ENCODE measurements at regions of chr18 and their contacts with region 1.

Region 1: GRCh38 chr18:74342416-74343043 is 26.9 kb downstream of the C18orf63 start:
- DNase-seq: peak; percentile 47
- H3K4me3 ChIP-seq: no peak overlapping the region
- H3K27ac ChIP-seq: no peak overlapping the region
- H3K4me1 ChIP-seq: peaks cover 5% of the 10 kb centered on the region
- H3K27me3 ChIP-seq: no peaks in the 10 kb centered on the region
- CTCF ChIP-seq: peak; percentile 44 to 56 (median 47)
- POLR2A ChIP-seq: no peak

Region 2: GRCh38 chr18:74196220-74197119 is 146.1 kb before region 1 on chr18:
- intact Hi-C with region 1: loop called (anchors 5 kb)
- DNase-seq: peak; percentile 63
- H3K4me3 ChIP-seq: no peak overlapping the region
- H3K27ac ChIP-seq: no peak overlapping the region
- H3K4me1 ChIP-seq: no peaks in the 10 kb centered on the region
- H3K27me3 ChIP-seq: no peaks in the 10 kb centered on the region
- CTCF ChIP-seq: peak; percentile 87 to 96 (median 94)
- POLR2A ChIP-seq: no peak

Region 3: GRCh38 chr18:74702950-74703349 is 360.4 kb after region 1 on chr18:
- intact Hi-C with region 1: no loop called
- DNase-seq: no peak
- H3K4me3 ChIP-seq: no peak overlapping the region
- H3K27ac ChIP-seq: no peak overlapping the region
- H3K4me1 ChIP-seq: no peaks in the 10 kb centered on the region
- H3K27me3 ChIP-seq: no peaks in the 10 kb centered on the region
- CTCF ChIP-seq: no peak
- POLR2A ChIP-seq: no peak